ENCODE measurements at regions of chr5 and their contacts with region 1.

Region 1: DNA sequence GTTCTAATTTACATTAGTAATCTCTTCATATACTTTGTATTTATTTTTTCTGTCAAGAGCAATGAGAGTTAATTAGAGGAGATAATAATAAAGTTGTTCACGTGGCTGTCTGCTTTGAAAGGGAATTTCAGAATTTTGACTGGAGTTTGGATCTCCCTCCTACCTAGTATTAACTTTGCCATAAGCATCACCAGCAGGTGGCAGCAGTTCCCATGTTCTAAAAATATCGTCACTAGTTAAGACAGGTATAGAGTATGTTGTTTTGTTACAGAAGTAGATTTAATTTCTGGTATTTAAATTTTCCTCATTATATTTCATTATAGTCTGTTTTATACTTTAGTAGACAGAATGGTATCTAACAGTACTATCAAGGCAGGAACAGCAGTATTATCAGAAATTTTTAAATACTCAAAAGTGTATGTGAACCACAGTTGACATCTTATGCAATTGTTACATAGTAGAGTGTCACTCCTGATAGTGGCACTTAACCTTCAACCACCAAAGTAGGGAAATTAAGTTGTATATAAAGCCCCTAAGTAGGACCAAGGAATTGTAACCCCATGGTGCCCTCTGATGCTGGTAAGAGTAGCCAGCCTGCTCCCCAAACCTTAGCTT is 20.4 kb downstream of the GNPDA1 start:
- DNase-seq: peak in 2 of 3 donors; percentile 56 to 95
- ATAC-seq: peak; percentile 72
- H3K4me3 ChIP-seq: no peak overlapping the region
- H3K4me1 ChIP-seq: no peaks in the 10 kb centered on the region
- CTCF ChIP-seq: peak; percentile 50

Region 2: DNA sequence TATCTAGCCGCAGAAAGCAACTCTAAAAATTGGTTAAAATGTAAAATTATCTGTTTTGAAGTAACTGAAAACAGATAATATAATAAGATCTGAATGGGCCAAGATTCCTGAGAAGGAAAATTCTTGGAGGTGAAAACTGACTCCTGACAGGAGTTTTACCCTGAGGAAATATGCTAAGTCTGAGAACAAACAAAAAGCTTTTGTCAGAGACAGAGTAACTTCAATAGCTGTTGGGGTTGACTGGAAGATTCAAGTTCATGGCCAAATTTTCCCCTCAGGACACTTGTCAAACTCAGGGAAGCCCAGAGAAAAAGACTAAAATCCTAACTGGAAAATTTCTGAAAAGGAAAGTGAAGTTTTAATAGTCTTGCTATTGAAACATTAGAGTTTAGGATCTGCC is 865.2 kb before region 1 on chr5:
- intact Hi-C with region 1: no loop called
- DNase-seq: no peak
- ATAC-seq: no peak
- H3K4me3 ChIP-seq: no peak overlapping the region
- H3K4me1 ChIP-seq: no peaks in the 10 kb centered on the region
- CTCF ChIP-seq: no peak

Region 3: GRCh38 chr5:141910271-141910673 is 82.2 kb before region 1 on chr5:
- intact Hi-C with region 1: no loop called
- DNase-seq: no peak
- ATAC-seq: peak; percentile 20
- H3K4me3 ChIP-seq: no peak overlapping the region
- H3K4me1 ChIP-seq: peaks cover 3% of the 10 kb centered on the region
- CTCF ChIP-seq: no peak

Region 4: DNA sequence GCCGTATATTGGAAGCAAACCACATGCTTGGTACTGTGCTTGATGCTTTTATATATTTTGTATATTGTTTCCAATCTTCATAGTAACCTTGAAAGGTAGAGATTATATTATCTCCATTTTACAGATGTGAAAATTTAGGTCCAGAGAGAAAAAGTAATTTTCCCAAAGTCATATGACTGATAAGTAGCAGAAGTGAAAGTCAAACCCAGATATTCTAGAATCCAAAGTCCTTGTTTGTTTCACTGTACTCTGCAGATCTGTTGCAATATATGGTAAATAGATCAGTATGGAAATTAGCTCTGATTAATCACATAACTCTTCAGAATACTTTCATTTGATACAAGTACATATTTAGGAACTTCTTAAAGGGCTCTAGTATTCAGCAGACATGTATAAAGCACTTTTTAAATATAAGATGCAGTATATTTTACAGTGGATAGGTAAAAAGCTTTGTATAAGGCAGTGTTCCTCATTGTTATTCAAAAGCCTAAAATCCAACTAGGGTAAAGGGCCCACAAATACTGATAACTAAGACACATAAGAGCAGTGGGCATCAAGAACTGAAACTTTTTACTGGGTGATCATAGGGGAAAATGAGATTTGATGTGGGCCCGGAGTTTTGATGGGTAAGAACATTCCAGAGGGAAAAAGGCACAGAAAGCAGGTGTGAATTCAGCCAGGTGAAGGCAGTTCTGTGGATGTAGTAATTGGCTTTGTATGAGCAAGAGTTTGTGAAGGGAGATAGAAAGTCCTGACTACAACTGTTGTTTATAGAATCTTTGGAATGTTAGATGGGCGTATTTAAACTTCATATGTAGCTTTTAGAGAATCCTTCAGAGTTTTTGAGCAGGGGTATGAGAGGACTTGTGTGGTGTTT is 141.1 kb after region 1 on chr5:
- intact Hi-C with region 1: loop called in 1 of 2 experiments (anchors 10 kb)
- DNase-seq: no peak
- ATAC-seq: no peak
- H3K4me3 ChIP-seq: no peak overlapping the region
- H3K4me1 ChIP-seq: no peaks in the 10 kb centered on the region
- CTCF ChIP-seq: no peak

Region 5: DNA sequence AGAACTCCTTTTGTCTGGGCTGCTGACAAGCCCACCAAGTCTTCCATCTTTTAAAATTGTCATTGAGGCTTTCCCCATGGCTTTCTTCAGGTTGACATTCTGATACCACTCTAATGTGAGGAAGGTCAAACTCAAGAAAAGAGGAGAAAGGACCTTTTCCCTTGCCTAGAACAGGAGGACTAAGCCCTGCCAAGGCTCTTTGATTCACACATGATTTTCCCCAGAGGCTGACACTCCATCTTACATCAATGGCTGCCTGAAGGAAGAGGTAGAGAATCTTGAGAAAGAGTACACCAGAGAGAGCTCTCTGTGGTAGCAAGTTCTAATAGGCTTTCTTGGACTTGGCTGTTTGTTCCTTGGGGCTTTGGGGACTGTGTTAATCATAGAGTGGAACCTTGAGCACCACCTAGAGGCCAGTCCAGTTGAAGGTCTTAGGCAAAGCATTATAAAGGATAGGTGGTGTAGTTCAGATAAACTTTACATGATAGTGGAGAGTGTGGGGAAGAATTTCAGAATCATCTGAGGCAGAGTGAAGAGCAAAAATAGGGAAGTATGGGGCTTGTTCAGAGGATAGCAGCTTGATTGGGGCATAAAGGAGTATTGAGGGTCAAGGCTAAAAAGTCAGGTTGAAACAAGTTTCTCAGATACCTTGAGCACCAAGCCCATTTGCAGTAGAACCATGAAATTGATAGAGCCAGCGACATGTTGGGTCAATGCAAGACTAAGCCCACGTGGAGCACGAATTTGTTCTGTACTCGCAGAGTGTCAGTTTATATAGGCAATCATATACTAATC is 152.8 kb after region 1 on chr5:
- intact Hi-C with region 1: loop called in 1 of 2 experiments (anchors 5 kb)
- DNase-seq: peak in 1 of 3 donors; percentile 90
- ATAC-seq: peak; percentile 88
- H3K4me3 ChIP-seq: no peak overlapping the region
- H3K4me1 ChIP-seq: no peaks in the 10 kb centered on the region
- CTCF ChIP-seq: no peak

Region 6: GRCh38 chr5:142175039-142175438 is 182.6 kb after region 1 on chr5:
- intact Hi-C with region 1: no loop called
- DNase-seq: no peak
- ATAC-seq: no peak
- H3K4me3 ChIP-seq: no peak overlapping the region
- H3K4me1 ChIP-seq: no peaks in the 10 kb centered on the region
- CTCF ChIP-seq: no peak